Prostate gland (tissue), 2 donors: ENCODE measurements at regions of chr1 and their contacts with region 1.

Region 1: GRCh38 chr1:234499119-234499942 is 20.4 kb upstream of the TARBP1 start:
- DNase-seq: peak; percentile 91
- H3K4me3 ChIP-seq: no peak overlapping the region
- H3K27ac ChIP-seq: peak overlapping the region; percentile 75 to 84
- H3K4me1 ChIP-seq: peaks cover 4% of the 10 kb centered on the region
- H3K27me3 ChIP-seq: no peaks in the 10 kb centered on the region
- CTCF ChIP-seq: peak; percentile 89 to 99 (median 96)
- POLR2A ChIP-seq: no peak

Region 2: DNA sequence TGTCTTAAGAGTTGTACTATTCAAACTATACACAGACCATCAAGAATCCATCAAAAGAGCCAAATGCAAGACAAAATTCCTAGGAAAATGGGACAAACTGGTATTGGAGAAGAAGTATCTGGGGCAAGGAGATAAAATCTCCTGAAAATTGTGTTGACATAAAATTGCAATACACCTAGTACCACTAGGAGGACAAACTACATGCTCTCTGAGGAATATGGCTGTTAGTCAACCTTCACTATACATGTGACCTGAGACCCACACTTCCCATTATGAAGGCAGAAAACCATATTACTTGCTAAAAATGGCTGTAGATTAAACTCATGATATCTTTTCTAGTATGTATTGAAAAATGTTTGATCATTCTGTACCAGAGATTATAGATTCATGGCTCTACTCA is 80.6 kb after region 1 on chr1:
- intact Hi-C with region 1: loop called (anchors 5 kb)
- DNase-seq: no peak
- H3K4me3 ChIP-seq: no peak overlapping the region
- H3K27ac ChIP-seq: no peak overlapping the region
- H3K4me1 ChIP-seq: no peaks in the 10 kb centered on the region
- H3K27me3 ChIP-seq: no peaks in the 10 kb centered on the region
- CTCF ChIP-seq: peak in 2 of 4 experiments; percentile 16 to 38
- POLR2A ChIP-seq: no peak